ENCODE measurements at regions of chr18 and their contacts with region 1.

Region 1: DNA sequence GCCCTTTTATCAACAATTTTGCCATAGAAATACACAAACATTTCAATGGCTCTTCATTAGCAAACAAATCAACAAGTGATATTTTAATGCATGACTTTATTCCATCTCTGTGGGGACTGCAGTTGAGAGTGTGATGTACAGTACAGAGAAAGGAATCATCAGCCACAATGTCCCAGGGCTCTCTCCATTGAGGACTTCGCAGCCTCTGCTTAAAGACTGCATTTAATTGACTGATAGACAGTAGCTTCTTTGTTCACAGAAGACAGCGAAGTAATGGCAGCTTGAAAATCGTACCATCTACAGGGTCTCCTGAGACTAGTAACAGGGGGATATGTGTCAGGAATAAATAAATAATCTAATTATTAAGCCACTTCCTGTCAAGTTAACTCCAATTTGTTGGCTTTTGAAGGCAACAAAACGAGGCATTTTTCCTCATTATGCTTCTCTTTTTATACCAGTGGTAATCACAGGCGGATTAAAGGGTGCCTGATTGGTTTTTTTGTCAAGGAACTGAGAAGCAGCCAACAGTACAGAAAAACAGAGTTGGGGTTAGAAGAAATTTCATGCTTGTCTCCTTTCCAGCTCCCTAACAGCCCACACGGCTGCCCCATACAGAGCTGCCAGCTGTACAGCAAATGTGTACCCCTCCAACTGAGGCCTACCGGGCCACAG is 164.3 kb downstream of the ZNF521 start:
- DNase-seq: no peak
- ATAC-seq: no peak
- H3K4me3 ChIP-seq: no peak overlapping the region
- H3K27ac ChIP-seq: no peak overlapping the region
- H3K4me1 ChIP-seq: peaks cover 0 to 14% (median 0%) of the 10 kb centered on the region in 9 donors
- H3K27me3 ChIP-seq: no peaks in the 10 kb centered on the region
- CTCF ChIP-seq: no peak

Region 2: GRCh38 chr18:25099895-25100294 is 87.8 kb before region 1 on chr18:
- intact Hi-C with region 1: loop called in 1 of 10 experiments (anchors 10 kb)
- DNase-seq: no peak
- ATAC-seq: no peak
- H3K4me3 ChIP-seq: no peak overlapping the region
- H3K27ac ChIP-seq: no peak overlapping the region
- H3K4me1 ChIP-seq: peaks cover 2 to 44% (median 15%) of the 10 kb centered on the region in 9 donors
- H3K27me3 ChIP-seq: no peaks in the 10 kb centered on the region
- CTCF ChIP-seq: no peak

Measured in heart right ventricle (tissue), 16 donors.